ENCODE measurements at regions of chr9 and their contacts with region 1.

Region 1: DNA sequence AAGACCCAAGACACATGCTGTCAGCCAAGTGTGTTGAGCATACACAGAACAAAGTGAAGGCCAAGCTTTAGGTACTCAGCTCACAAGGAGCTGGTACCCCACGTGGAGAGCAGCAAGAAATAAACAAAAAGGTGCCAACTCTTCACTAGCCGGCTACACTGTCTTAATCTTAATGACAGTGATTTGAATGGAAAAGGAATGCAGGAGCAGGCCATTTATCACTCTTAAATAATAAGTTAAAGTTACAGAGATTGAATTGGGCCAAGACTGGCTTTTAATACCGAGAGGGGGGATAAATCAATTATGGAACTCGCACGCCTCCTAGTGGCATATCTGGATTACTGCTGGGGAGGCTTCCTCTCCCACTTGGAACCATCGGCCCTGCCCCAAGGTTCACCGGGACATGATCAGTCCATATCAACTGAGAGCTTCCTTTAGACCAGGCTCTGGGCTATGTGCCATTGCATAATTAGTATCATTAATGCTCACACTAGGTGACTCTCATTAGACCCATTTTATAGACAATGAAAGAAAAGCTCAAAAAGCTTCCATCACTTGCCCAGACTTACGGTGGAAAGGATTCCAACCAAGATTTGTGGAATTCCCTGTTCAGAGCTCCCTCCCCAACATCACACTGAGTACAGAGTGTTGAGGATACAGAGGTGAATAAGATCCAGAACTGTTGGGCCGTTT is 94.0 kb downstream of the ACTL7B start:
- DNase-seq: peak; percentile 50 to 85
- ATAC-seq: peak; percentile 70 to 93
- H3K4me3 ChIP-seq: no peak overlapping the region
- H3K27ac ChIP-seq: peak overlapping the region; percentile 12 to 25; a peak in 2 of 6 replicates
- H3K4me1 ChIP-seq: no peaks in the 10 kb centered on the region
- CTCF ChIP-seq: peak; percentile 91
- EP300 ChIP-seq: no peak
- POLR2A ChIP-seq: no peak
- RAD21 ChIP-seq: peak; percentile 93 to 96

Region 2: DNA sequence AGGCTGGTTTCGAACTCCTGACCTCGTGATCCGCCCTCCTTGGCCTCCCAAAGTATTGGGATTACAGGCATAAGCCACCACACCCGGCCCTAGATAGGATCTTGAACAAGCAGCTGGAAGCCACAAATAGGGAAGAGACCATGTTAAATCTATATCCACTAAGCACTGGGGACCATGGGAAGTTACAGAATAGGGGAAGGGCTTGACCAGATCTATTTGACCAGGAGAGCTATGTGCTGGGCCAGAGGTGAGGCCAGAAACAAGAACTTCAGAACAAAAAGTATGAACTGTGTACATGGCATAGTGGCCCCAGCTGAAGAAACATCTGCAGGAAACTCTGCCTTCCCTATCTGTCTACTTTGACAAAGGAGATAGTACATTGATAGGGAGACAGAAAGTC is 1283.0 kb before region 1 on chr9:
- CTCF ChIA-PET with region 1: interaction called, 11 read pairs
- POLR2A ChIA-PET with region 1: no interaction called
- DNase-seq: no peak
- ATAC-seq: no peak
- H3K4me3 ChIP-seq: no peak overlapping the region
- H3K27ac ChIP-seq: peak overlapping the region in 1 of 2 experiments; percentile 6; a peak in 3 of 6 replicates
- H3K4me1 ChIP-seq: peaks cover 13% of the 10 kb centered on the region
- CTCF ChIP-seq: no peak
- EP300 ChIP-seq: no peak
- POLR2A ChIP-seq: no peak
- RAD21 ChIP-seq: no peak

Region 3: DNA sequence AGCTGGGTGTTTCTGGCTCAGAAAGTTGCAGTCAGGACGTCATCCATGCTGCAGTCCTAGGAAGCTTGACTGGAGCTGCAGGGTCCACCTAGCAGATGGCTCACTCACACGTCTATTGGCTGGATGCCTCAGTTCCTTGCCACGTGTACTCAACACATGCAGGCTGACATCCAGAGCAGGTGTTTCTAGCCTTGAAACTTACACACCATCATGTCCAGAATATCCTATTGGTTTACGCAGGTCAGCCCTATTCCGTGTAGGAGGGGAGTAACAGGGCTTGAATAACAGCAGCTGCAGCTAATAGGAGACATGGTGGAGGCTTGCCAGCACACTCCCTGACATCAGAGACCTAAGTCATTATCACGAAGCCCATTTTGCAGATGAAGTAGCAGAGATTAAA is 379.5 kb before region 1 on chr9:
- CTCF ChIA-PET with region 1: no interaction called
- POLR2A ChIA-PET with region 1: interaction called, 10 read pairs
- DNase-seq: no peak
- ATAC-seq: no peak
- H3K4me3 ChIP-seq: no peak overlapping the region
- H3K27ac ChIP-seq: no peak overlapping the region
- H3K4me1 ChIP-seq: peaks cover 4% of the 10 kb centered on the region; the same call in 1 of the 3 replicates
- CTCF ChIP-seq: no peak
- EP300 ChIP-seq: no peak
- POLR2A ChIP-seq: no peak
- RAD21 ChIP-seq: no peak

Region 4: DNA sequence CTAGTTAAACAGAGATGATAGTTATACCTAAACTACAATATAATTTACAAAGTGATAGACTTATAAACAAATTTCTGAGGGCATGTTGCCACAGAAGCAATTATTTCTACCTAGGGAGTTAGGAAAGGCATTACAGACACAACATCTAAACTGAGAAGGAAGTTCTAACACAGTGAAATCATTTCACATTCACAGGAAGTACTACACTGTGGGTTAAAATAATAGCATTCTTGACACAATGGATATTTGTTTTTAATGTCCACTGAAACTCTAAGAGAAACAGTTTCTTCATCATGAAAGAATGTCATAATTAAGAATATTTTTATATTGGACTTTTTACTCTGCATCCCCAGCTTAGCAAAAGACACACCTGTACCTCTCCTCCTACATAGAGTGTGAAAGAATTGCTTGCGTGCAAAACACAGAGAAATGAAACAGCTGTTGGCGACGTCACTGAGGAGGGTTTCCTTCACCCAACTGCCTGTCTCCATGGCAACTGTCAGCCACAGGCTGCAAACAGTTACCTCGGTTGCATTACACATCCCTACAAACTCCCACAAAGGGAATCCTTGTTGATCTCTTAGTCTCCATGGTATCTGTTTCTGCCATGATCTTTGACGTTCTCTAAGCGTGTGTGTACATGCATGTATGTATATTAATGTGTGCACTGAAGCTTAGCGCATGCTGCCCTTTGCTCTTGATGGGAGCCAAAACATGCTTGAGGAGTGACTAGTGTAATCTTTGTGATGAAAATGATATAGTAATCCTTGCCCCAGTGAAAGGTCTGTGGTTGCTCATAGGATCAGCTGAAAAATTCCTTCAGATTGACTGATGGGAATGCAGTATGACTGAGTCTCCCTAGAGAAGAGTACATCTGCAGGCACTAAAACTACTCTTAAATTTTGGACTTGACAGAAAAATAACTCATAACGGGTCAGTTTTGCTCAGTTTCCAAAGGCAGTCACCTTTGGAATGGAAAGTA is 74.5 kb before region 1 on chr9:
- CTCF ChIA-PET with region 1: no interaction called
- POLR2A ChIA-PET with region 1: no interaction called
- DNase-seq: no peak
- ATAC-seq: no peak
- H3K4me3 ChIP-seq: no peak overlapping the region
- H3K27ac ChIP-seq: no peak overlapping the region
- H3K4me1 ChIP-seq: no peaks in the 10 kb centered on the region
- CTCF ChIP-seq: no peak
- EP300 ChIP-seq: no peak
- POLR2A ChIP-seq: no peak
- RAD21 ChIP-seq: no peak

Region 5: DNA sequence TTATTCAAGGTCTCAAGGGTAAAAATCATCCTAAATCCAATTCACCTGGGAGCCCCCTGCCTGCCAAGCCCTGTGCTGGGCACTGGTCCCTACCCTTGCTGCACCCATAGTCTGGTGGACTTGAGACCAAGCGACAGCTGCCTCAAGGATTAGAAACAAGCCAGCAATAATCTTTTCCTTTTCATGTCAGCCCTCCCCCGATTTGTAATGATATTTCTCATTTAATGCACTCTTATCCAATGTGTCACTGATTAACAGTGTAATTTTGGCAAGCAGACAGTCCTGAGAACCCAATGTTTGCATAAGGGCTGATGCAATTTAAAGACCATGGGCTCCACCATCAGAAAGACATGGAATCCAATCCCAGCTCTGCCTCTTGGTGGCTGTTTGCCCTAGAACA is 14.9 kb before region 1 on chr9:
- CTCF ChIA-PET with region 1: interaction called, 19 read pairs
- POLR2A ChIA-PET with region 1: no interaction called
- DNase-seq: no peak
- ATAC-seq: no peak
- H3K4me3 ChIP-seq: no peak overlapping the region
- H3K27ac ChIP-seq: no peak overlapping the region
- H3K4me1 ChIP-seq: no peaks in the 10 kb centered on the region; the same call in 1 of the 3 replicates
- CTCF ChIP-seq: no peak
- EP300 ChIP-seq: no peak
- POLR2A ChIP-seq: no peak
- RAD21 ChIP-seq: no peak

Region 6: DNA sequence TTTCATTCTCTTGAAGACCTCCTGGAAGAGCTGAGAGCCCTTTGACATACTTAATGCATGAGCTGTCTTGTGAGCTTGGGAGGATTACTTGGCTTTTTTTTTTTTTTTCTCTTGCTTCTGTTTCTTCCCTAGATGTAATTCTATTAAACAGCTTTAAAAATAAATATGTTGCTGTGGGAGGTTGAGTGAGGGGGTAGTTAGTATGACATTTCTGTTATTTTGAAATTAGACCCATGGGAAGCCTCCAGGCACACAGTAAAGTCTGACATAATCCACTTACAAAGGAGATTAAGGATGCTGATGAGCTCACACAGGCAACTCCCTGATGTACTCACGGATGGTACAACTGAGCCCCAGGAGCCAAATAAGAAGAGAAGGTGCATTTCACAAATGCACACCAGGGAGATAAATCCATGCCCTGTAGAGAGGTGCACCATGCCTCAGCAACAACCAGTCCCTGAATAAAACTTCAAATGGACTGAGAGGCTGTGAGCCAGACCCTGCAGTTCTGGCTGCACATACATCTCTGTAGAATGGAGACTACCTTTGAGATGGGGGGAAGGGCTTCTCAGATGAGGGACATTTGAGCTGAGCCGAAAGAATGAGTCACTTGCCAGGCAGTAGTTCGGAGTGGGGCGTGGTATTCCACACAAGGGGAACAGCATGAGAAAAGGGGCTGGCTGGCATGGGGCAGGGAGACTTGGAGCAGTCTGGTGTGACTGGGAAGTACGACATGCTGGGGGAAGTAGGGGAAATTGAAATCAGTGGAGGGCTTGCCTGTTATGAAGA is 25.3 kb after region 1 on chr9:
- CTCF ChIA-PET with region 1: interaction called, 21 read pairs
- POLR2A ChIA-PET with region 1: no interaction called
- DNase-seq: peak; percentile 21 to 25
- ATAC-seq: peak; percentile 60 to 76
- H3K4me3 ChIP-seq: no peak overlapping the region
- H3K27ac ChIP-seq: peak overlapping the region; percentile 10 to 67; a peak in 5 of 6 replicates
- H3K4me1 ChIP-seq: peaks cover 15% of the 10 kb centered on the region
- CTCF ChIP-seq: no peak
- EP300 ChIP-seq: 0 out of 5 replicates have a peak, but pooled peaks of 1 of the 2 experiments have one; percentile 15
- POLR2A ChIP-seq: no peak
- RAD21 ChIP-seq: no peak

Region 7: GRCh38 chr9:108859459-108860114 is 97.8 kb after region 1 on chr9:
- CTCF ChIA-PET with region 1: no interaction called
- POLR2A ChIA-PET with region 1: no interaction called
- DNase-seq: no peak
- ATAC-seq: no peak
- H3K4me3 ChIP-seq: no peak overlapping the region
- H3K27ac ChIP-seq: no peak overlapping the region
- H3K4me1 ChIP-seq: no peaks in the 10 kb centered on the region
- CTCF ChIP-seq: no peak
- EP300 ChIP-seq: no peak
- POLR2A ChIP-seq: no peak
- RAD21 ChIP-seq: no peak

Region 8: GRCh38 chr9:108994695-108995094 is 232.9 kb after region 1 on chr9:
- CTCF ChIA-PET with region 1: no interaction called
- POLR2A ChIA-PET with region 1: no interaction called
- DNase-seq: no peak
- ATAC-seq: no peak
- H3K4me3 ChIP-seq: no peak overlapping the region
- H3K27ac ChIP-seq: no peak overlapping the region
- H3K4me1 ChIP-seq: no peaks in the 10 kb centered on the region
- CTCF ChIP-seq: no peak
- EP300 ChIP-seq: no peak
- POLR2A ChIP-seq: no peak
- RAD21 ChIP-seq: no peak